ENCODE measurements at regions of chr6 and their contacts with region 1.

Region 1: DNA sequence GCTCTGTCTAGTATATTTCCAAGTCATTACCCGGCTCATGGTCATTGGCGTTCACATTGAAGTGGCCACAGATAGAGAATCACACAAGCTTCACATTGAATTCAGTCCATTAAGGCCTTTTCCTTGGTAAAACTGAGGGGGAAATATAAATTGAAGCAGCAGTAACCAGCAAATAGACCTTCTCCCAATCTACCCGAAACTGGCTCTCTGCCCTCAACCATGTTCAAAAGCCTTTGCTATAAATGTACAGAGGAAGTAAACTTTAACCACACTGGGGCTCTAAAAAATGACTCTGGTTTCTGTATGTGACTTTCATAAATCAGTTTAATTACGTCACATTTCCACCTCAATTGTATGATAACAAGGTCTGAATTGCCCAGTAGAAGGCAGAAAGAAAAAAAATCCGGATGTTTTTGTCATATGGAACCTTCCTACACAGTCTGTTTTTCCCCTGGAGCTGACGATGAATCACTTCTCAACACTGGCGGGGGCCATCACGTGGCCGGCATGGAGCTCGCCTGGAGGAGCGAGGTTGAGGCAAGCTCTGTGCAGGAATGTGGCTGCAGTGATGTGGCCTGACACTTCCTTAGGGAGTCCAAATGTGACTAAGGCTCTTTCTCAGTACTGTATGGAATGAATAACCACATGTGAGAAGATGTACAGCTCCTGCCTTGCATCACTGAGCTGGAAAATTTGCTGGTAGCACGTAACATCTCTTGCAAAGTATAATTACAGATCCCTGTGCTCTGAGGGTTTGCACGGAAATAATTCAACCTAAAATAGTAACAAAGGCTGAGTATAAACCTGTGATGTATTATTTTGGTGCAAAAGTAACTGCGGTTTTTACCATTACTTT is 58.6 kb upstream of the SNX9 start:
- DNase-seq: peak; percentile 98
- H3K4me3 Mint-ChIP-seq: peak overlapping the region; percentile 53
- H3K27ac Mint-ChIP-seq: peak overlapping the region; percentile 92
- H3K4me1 Mint-ChIP-seq: peaks cover 58% of the 10 kb centered on the region
- H3K27me3 Mint-ChIP-seq: no peaks in the 10 kb centered on the region
- CTCF ChIP-seq: no peak

Region 2: GRCh38 chr6:157323255-157323965 is 441.0 kb before region 1 on chr6 and contains the start of gene TMEM242:
- CTCF ChIA-PET with region 1: interaction called, 3 read pairs
- POLR2A ChIA-PET with region 1: interaction called, 14 read pairs
- intact Hi-C with region 1: loop called (anchors 10 kb)
- DNase-seq: peak; percentile 93
- H3K4me3 Mint-ChIP-seq: peak within 1 kb of the TSS; percentile 81
- H3K27ac Mint-ChIP-seq: peak within 1 kb of the TSS; percentile 87
- H3K4me1 Mint-ChIP-seq: no peaks in the 10 kb centered on the region
- H3K27me3 Mint-ChIP-seq: no peaks in the 10 kb centered on the region
- CTCF ChIP-seq: no peak
- total RNA-seq, gene TMEM242: 9.4 and 10.1 TPM in 2 replicates

Region 3: GRCh38 chr6:157715765-157716164 is 48.6 kb before region 1 on chr6:
- CTCF ChIA-PET with region 1: interaction called, 20 read pairs
- POLR2A ChIA-PET with region 1: interaction called, 50 read pairs
- intact Hi-C with region 1: loop called (anchors 2 kb)
- DNase-seq: peak; percentile 98
- H3K4me3 Mint-ChIP-seq: peak overlapping the region; percentile 70
- H3K27ac Mint-ChIP-seq: peak overlapping the region; percentile 100
- H3K4me1 Mint-ChIP-seq: peaks cover 42% of the 10 kb centered on the region
- H3K27me3 Mint-ChIP-seq: no peaks in the 10 kb centered on the region
- CTCF ChIP-seq: no peak

Region 4: GRCh38 chr6:157823528-157824370 is 59.3 kb after region 1 on chr6:
- CTCF ChIA-PET with region 1: interaction called, 5 read pairs
- POLR2A ChIA-PET with region 1: interaction called, 79 read pairs
- intact Hi-C with region 1: loop called (anchors 2 kb)
- DNase-seq: peak; percentile 73
- H3K4me3 Mint-ChIP-seq: peak overlapping the region; percentile 91
- H3K27ac Mint-ChIP-seq: peak overlapping the region; percentile 99
- H3K4me1 Mint-ChIP-seq: peaks cover 6% of the 10 kb centered on the region
- H3K27me3 Mint-ChIP-seq: no peaks in the 10 kb centered on the region
- CTCF ChIP-seq: no peak

Region 5: GRCh38 chr6:157841211-157841840 is 76.9 kb after region 1 on chr6:
- CTCF ChIA-PET with region 1: interaction called, 6 read pairs
- POLR2A ChIA-PET with region 1: interaction called, 46 read pairs
- intact Hi-C with region 1: no loop called
- DNase-seq: peak; percentile 76
- H3K4me3 Mint-ChIP-seq: no peak overlapping the region
- H3K27ac Mint-ChIP-seq: peak overlapping the region; percentile 8
- H3K4me1 Mint-ChIP-seq: peaks cover 50% of the 10 kb centered on the region
- H3K27me3 Mint-ChIP-seq: no peaks in the 10 kb centered on the region
- CTCF ChIP-seq: no peak